ENCODE measurements at regions of chr13 and their contacts with region 1.

Region 1: GRCh38 chr13:51797664-51798488 is 6.1 kb downstream of the DHRS12 start:
- DNase-seq: peak; percentile 66 to 81 (median 71)
- H3K4me3 ChIP-seq: no peak overlapping the region
- H3K4me3 Mint-ChIP-seq: no peak overlapping the region
- H3K27ac ChIP-seq: peak overlapping the region; percentile 11
- H3K27ac Mint-ChIP-seq: peak overlapping the region; percentile 27 to 92 (median 77)
- H3K4me1 ChIP-seq: peaks cover 17% of the 10 kb centered on the region
- H3K4me1 Mint-ChIP-seq: peaks cover 20 to 39% (median 23%) of the 10 kb centered on the region in 4 donors
- H3K27me3 ChIP-seq: no peaks in the 10 kb centered on the region
- H3K27me3 Mint-ChIP-seq: no peaks in the 10 kb centered on the region

Region 2: DNA sequence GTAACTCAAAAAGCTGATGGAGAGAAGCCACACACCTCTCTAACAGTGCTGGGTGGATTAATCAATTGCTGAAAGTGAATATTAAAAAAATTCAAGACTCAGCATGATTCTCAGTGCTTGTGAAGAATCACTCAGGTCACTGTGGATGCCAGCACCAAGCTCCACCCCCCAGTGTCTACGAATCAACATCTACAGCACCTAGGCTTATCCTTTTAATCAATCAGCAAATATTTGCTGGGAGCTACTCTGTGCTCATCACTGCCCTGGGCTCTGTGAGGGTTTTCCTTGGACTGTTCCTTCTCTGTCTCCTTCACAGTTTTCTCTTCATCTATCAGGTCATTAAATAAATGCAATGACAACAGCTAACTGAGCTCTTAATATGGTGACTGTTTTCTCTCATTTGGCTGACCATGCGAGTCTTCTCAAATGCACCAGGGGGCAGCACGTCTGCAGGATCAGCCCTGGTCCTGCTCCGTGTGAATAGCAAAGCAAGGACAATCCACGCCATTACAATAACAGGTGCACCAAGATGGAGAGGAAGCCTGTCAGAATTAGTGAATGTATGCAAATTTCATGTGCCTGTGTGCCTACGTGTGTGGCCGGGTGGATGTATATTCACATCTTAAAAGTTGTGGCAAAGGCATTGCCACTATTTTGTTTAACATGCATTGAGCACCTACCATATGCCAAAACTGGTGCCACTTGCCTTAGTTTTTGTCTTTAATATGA is 672.2 kb before region 1 on chr13:
- CTCF ChIA-PET with region 1: interaction called, 59 read pairs
- POLR2A ChIA-PET with region 1: no interaction called
- intact Hi-C with region 1: no loop called
- DNase-seq: peak in 4 of 5 donors; percentile 23 to 40 (median 26)
- H3K4me3 ChIP-seq: no peak overlapping the region
- H3K4me3 Mint-ChIP-seq: no peak overlapping the region
- H3K27ac ChIP-seq: no peak overlapping the region
- H3K27ac Mint-ChIP-seq: peak overlapping the region in 1 of 7 donors; percentile 4
- H3K4me1 ChIP-seq: peaks cover 10% of the 10 kb centered on the region
- H3K4me1 Mint-ChIP-seq: peaks cover 8 to 13% (median 12%) of the 10 kb centered on the region in 4 donors
- H3K27me3 ChIP-seq: no peaks in the 10 kb centered on the region
- H3K27me3 Mint-ChIP-seq: peaks cover 6 to 14% of the 10 kb centered on the region in 2 donors

Region 3: DNA sequence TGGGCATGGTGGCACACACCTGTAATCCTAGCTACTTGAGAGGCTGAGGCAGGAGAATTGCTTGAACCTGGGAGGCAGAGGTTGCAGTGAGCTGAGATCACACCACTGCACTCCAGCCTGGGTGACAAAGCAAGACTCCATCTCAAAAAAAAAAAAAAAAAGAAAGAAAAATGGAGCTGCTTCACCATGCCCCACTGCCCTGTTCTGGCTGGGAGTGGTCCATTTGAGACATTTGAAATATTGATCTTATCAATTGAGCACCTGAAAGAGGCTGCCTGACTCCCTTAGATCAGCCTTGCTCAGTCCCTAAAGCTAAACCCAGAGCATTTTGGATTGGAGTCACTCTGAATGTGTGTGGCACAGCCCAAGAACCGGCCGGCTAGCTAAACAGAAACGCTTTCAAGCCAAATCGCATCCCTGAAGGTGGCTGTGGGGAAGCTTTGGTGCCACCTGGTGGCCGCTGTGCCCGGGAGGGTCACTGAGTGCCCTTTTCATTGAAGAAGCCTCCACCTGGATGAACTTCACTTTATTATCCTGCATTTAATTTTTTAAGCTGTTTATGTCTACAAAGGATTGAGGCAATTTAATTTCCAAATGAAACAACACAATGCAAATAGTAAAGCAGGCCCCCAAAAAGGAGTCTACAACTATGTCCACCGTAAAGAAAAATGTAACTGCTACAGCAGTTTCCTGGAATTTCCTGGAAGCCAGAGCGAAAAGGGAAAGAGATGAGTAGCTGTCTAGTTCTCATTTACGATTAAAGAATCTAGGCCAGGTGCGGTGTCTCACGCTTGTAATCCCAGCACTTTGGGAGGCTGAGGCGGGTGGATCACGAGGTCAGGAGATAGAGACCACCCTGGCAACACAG is 511.5 kb before region 1 on chr13:
- CTCF ChIA-PET with region 1: interaction called, 37 read pairs
- POLR2A ChIA-PET with region 1: no interaction called
- intact Hi-C with region 1: loop called (anchors 1 kb)
- DNase-seq: peak; percentile 35 to 50 (median 44)
- H3K4me3 ChIP-seq: no peak overlapping the region
- H3K4me3 Mint-ChIP-seq: peak overlapping the region in 3 of 8 donors; percentile 7 to 39 (median 17)
- H3K27ac ChIP-seq: no peak overlapping the region
- H3K27ac Mint-ChIP-seq: no peak overlapping the region
- H3K4me1 ChIP-seq: no peaks in the 10 kb centered on the region
- H3K4me1 Mint-ChIP-seq: peaks cover 0 to 1% (median 0%) of the 10 kb centered on the region in 4 donors
- H3K27me3 ChIP-seq: no peaks in the 10 kb centered on the region
- H3K27me3 Mint-ChIP-seq: peaks cover 7 to 9% of the 10 kb centered on the region in 2 donors

Region 4: DNA sequence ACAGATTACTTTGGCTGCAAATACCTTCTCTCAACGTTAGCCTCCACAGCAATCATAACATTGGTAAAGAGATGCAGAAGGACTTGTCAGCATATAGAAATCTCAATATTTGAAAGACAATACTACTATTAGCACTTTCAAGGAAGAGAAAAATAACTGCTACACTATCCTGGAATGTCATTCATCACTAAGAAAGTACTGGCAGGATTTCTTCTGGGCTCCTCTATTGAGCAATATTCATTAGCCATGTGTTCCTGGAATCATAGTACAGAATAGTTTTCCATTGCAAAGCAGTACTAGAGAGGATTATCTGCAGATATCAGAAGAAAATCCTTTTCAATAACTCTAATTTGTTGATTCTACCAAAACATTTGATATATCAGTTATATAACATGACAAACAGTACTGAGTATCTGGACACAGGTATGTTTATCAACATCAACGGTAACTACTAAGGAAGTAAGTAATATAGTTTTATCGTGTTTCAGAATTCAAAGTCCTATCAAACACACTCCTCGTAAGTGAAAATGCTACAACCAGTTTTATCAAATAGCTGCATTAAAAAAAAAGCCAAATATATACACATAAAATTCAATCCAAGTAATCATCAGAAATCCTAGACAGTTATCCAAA is 372.4 kb before region 1 on chr13:
- CTCF ChIA-PET with region 1: interaction called, 13 read pairs
- POLR2A ChIA-PET with region 1: no interaction called
- intact Hi-C with region 1: no loop called
- DNase-seq: no peak
- H3K4me3 ChIP-seq: no peak overlapping the region
- H3K4me3 Mint-ChIP-seq: peak overlapping the region in 3 of 8 donors; percentile 7 to 41 (median 8)
- H3K27ac ChIP-seq: no peak overlapping the region
- H3K27ac Mint-ChIP-seq: peak overlapping the region in 1 of 7 donors; percentile 25
- H3K4me1 ChIP-seq: peaks cover 67% of the 10 kb centered on the region
- H3K4me1 Mint-ChIP-seq: peaks cover 58 to 86% (median 72%) of the 10 kb centered on the region in 4 donors
- H3K27me3 ChIP-seq: no peaks in the 10 kb centered on the region
- H3K27me3 Mint-ChIP-seq: no peaks in the 10 kb centered on the region

Region 5: GRCh38 chr13:51444922-51445321 is 353.0 kb before region 1 on chr13:
- CTCF ChIA-PET with region 1: interaction called, 61 read pairs
- POLR2A ChIA-PET with region 1: interaction called, 220 read pairs
- intact Hi-C with region 1: no loop called
- DNase-seq: peak in 1 of 5 donors; percentile 26
- H3K4me3 ChIP-seq: no peak overlapping the region
- H3K4me3 Mint-ChIP-seq: no peak overlapping the region
- H3K27ac ChIP-seq: no peak overlapping the region
- H3K27ac Mint-ChIP-seq: no peak overlapping the region
- H3K4me1 ChIP-seq: peaks cover 10% of the 10 kb centered on the region
- H3K4me1 Mint-ChIP-seq: peaks cover 13 to 29% (median 17%) of the 10 kb centered on the region in 4 donors
- H3K27me3 ChIP-seq: no peaks in the 10 kb centered on the region
- H3K27me3 Mint-ChIP-seq: no peaks in the 10 kb centered on the region

Region 6: GRCh38 chr13:51689663-51689996 is 108.2 kb before region 1 on chr13:
- CTCF ChIA-PET with region 1: no interaction called
- POLR2A ChIA-PET with region 1: no interaction called
- intact Hi-C with region 1: no loop called
- DNase-seq: no peak
- H3K4me3 ChIP-seq: no peak overlapping the region
- H3K4me3 Mint-ChIP-seq: no peak overlapping the region
- H3K27ac ChIP-seq: no peak overlapping the region
- H3K27ac Mint-ChIP-seq: no peak overlapping the region
- H3K4me1 ChIP-seq: no peaks in the 10 kb centered on the region
- H3K4me1 Mint-ChIP-seq: peaks cover 4 to 9% (median 8%) of the 10 kb centered on the region in 4 donors
- H3K27me3 ChIP-seq: no peaks in the 10 kb centered on the region
- H3K27me3 Mint-ChIP-seq: no peaks in the 10 kb centered on the region

Region 7: DNA sequence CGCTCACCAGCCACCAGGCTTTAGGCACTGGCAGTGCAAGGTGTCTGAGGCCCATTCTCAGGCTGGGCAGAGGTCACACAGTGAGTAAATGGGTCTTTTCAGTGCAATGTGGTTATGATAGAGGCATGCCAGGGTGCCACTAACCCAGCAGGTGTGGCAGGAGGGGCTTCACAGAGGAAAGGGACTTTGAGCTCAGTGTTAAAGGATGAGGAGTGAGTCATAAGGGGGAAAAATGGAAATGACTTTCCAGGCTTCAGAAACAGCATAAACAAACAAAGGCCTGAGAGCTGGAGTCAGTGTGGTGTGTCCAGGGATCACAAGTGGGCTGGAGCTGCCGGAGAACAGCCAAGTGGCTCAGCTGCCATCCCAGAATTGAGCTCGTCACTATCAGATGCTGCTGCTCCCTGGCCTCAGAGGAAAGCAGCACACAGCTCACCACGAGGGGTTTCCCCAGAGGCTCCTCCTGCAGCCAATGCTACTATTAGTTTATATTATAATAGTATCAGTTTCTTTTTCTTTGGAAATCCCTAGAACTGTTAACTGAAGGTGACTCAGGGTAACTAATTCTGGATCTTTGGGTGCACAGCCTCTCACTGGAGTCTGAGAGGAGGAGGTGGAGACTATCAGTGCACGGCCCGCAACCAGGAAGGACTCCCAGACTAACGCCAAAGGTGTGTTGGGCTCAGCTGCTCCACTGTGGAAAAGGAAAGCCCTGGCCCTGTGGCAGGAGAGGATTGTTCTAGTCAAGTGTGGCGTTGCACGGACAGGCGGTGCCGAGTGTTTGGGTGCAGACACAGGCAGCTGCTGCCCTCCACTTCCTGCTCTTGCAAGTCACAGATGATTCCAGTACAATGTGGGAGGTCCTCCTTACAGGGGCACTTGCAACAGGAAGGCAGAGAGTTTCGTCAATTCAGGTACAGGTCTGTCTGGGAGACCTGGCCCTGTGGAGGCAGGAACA is 33.4 kb before region 1 on chr13:
- CTCF ChIA-PET with region 1: interaction called, 10 read pairs
- POLR2A ChIA-PET with region 1: interaction called, 15 read pairs
- intact Hi-C with region 1: loop called (anchors 2 kb)
- DNase-seq: peak; percentile 35 to 82 (median 55)
- H3K4me3 ChIP-seq: peak overlapping the region in 1 of 2 donors; percentile 17
- H3K4me3 Mint-ChIP-seq: peak overlapping the region; percentile 80 to 91 (median 82)
- H3K27ac ChIP-seq: peak overlapping the region; percentile 80
- H3K27ac Mint-ChIP-seq: peak overlapping the region; percentile 92 to 96 (median 95)
- H3K4me1 ChIP-seq: peaks cover 22% of the 10 kb centered on the region
- H3K4me1 Mint-ChIP-seq: peaks cover 15 to 35% (median 24%) of the 10 kb centered on the region in 4 donors
- H3K27me3 ChIP-seq: no peaks in the 10 kb centered on the region
- H3K27me3 Mint-ChIP-seq: no peaks in the 10 kb centered on the region

Region 8: GRCh38 chr13:51825165-51825592 is 27.3 kb after region 1 on chr13:
- CTCF ChIA-PET with region 1: interaction called, 15 read pairs
- POLR2A ChIA-PET with region 1: interaction called, 288 read pairs
- intact Hi-C with region 1: loop called (anchors 1 kb)
- DNase-seq: peak; percentile 57 to 84 (median 79)
- H3K4me3 ChIP-seq: peak overlapping the region; percentile 31 to 56
- H3K4me3 Mint-ChIP-seq: peak overlapping the region; percentile 86 to 95 (median 90)
- H3K27ac ChIP-seq: peak overlapping the region; percentile 65
- H3K27ac Mint-ChIP-seq: peak overlapping the region; percentile 88 to 95 (median 94)
- H3K4me1 ChIP-seq: peaks cover 81% of the 10 kb centered on the region
- H3K4me1 Mint-ChIP-seq: peaks cover 56 to 99% (median 77%) of the 10 kb centered on the region in 4 donors
- H3K27me3 ChIP-seq: no peaks in the 10 kb centered on the region
- H3K27me3 Mint-ChIP-seq: no peaks in the 10 kb centered on the region

Region 9: DNA sequence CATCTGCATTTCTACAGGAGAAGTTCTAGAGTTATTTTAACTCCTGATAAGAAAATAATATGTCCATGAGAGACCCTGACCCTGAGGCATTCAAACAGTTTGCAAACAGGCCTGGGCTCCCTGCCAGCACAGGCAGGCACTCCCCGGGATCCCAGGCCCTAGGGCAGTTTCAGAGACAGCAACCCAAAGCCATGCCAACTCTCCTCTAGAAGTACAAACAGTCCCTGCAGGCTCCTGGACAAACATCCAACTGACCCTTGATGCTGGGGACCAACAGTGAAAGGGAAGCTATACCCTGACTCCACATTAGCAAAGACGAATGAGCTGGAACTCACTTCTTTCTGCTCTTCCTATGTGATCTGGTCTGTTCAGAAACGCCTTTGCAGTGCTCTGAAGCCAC is 108.7 kb after region 1 on chr13:
- CTCF ChIA-PET with region 1: no interaction called
- POLR2A ChIA-PET with region 1: no interaction called
- intact Hi-C with region 1: no loop called
- DNase-seq: no peak
- H3K4me3 ChIP-seq: no peak overlapping the region
- H3K4me3 Mint-ChIP-seq: no peak overlapping the region
- H3K27ac ChIP-seq: no peak overlapping the region
- H3K27ac Mint-ChIP-seq: no peak overlapping the region
- H3K4me1 ChIP-seq: peaks cover 6% of the 10 kb centered on the region
- H3K4me1 Mint-ChIP-seq: peaks cover 17 to 42% (median 29%) of the 10 kb centered on the region in 4 donors
- H3K27me3 ChIP-seq: no peaks in the 10 kb centered on the region
- H3K27me3 Mint-ChIP-seq: peaks cover 0 to 5% of the 10 kb centered on the region in 2 donors

Region 10: DNA sequence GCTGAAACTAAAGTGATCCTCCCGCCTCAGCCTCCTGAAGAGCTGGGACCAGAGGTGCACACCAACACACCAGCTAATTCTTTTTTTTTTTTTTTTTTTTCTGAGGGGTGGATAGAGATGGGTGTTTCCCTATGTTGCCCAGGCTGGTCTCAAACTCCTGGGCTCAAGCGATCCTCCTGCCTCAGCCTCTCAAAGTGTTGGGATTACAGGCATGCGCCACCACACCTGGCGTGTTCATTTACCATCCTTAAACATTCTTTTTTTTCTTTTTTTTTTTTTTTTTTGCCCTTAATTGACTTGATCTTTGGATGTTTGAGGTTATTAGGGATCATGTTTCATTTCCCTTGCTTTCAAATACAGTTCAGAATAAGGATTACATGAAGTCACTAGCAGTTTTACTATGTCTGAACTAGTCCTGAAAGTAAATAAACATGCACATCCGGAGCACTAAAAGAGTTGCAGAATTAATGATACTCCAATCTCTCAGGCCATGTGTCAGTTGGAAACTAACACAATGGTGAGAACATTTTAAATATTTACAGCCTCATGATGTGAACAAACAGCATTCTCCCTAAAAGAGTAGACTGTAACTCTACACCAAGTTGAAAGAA is 236.8 kb after region 1 on chr13:
- CTCF ChIA-PET with region 1: no interaction called
- POLR2A ChIA-PET with region 1: no interaction called
- intact Hi-C with region 1: no loop called
- DNase-seq: no peak
- H3K4me3 ChIP-seq: no peak overlapping the region
- H3K4me3 Mint-ChIP-seq: no peak overlapping the region
- H3K27ac ChIP-seq: no peak overlapping the region
- H3K27ac Mint-ChIP-seq: no peak overlapping the region
- H3K4me1 ChIP-seq: no peaks in the 10 kb centered on the region
- H3K4me1 Mint-ChIP-seq: peaks cover 6 to 17% (median 8%) of the 10 kb centered on the region in 4 donors
- H3K27me3 ChIP-seq: no peaks in the 10 kb centered on the region
- H3K27me3 Mint-ChIP-seq: no peaks in the 10 kb centered on the region

Measured in CD4-positive, alpha-beta memory T cell (primary cell).